ENCODE measurements at regions of chr12 and their contacts with region 1.

Region 1: DNA sequence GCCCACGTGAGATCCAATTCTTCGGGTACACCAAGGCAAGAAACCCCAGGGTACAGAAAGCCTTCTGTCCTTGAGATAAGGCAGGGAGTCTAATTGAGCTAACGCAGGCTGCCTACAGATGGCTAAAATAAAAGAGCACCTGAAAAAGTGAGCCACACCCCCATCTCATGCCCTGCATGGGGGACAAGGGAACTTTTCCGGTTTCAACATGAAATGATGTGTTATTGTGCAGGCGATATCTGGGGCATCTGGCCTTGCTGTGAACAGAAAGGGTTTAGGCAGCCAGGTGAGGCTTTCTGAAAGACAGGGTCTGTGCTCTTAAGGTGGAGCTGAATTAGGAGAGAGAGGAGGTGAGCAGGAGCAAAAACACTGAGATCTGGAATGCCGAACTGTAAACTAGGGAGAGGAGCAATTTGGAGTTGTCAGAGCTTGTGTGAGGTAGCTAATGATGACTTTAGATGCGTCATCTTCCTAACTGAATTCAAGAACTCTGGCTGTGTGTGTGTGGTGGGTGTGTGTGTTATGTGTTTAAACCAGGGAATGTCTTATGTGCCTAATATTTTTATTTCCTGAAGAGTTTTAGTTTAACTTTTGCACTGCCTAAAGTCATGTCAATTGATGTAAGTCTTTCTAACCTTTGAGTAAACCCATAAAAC is 20.1 kb upstream of the LDHB start:
- DNase-seq: no peak
- ATAC-seq: no peak
- H3K4me3 ChIP-seq: no peak overlapping the region
- H3K27ac ChIP-seq: no peak overlapping the region
- H3K4me1 ChIP-seq: no peaks in the 10 kb centered on the region
- H3K27me3 ChIP-seq: no peaks in the 10 kb centered on the region

Region 2: DNA sequence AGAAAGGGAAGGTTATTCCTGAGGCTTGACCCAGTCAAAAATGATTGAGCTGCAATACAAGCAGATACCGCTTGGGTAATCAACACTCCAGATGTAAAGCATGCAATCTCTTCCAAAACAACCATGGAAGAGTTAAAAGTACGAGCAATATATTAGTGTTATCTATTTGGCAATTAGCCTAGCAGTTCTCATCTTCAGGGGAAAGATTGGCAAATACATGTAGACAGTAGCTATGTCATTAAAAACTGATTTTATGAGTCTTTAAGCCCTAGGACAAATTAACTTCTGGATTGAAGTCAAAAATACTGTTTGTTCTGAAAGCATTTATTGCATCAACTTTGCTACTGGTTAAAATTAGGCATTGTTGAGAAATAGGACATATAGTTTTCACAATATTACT is 63.8 kb before region 1 on chr12:
- intact Hi-C with region 1: loop called in 3 of 4 experiments (anchors 2 to 5 kb)
- DNase-seq: no peak
- ATAC-seq: no peak
- H3K4me3 ChIP-seq: no peak overlapping the region
- H3K27ac ChIP-seq: no peak overlapping the region
- H3K4me1 ChIP-seq: no peaks in the 10 kb centered on the region
- H3K27me3 ChIP-seq: no peaks in the 10 kb centered on the region

Measured in right cardiac atrium (tissue), 5 donors.